ENCODE measurements at regions of chr14 and their contacts with region 1.

Region 1: DNA sequence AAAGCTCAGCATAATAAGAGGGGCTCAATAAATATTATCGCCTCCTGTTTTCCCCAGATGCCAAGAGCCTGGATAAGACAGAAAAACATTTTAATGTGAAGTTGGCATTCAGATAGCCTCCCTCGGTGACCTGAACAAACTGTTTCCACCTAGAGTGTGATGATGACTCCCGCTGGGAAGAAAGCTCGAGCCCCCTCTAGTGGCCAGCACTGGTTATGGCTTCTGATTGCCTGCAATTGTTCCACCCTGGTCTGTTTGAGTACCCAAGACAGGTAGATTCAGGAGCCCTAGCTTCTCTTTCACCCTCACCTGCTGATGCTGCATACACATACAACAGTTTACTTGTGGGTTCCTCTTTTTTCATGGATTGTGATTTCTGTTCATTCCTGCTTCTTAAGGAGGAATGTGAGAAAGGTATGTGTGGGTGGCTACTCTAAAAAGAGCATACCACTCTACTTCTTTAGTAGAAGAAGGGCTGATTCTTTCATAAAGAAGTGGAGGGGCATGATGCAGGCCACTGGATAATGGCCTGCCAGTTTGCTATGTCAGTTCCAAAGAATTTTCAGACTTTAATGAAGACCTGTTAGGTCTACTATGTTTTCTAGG is 6.4 kb downstream of the ERG28 start:
- DNase-seq: peak; percentile 73 to 89 (median 81)
- H3K4me3 ChIP-seq: no peak overlapping the region
- H3K27ac ChIP-seq: no peak overlapping the region
- H3K27me3 ChIP-seq: no peaks in the 10 kb centered on the region
- CTCF ChIP-seq: peak; percentile 83 to 99 (median 97)

Region 2: GRCh38 chr14:75577729-75578101 is 76.5 kb before region 1 on chr14:
- intact Hi-C with region 1: loop called (anchors 2 to 5 kb)
- DNase-seq: peak; percentile 72 to 88 (median 80)
- H3K4me3 ChIP-seq: peak overlapping the region; percentile 24 to 78 (median 62)
- H3K27ac ChIP-seq: peak overlapping the region in 47 of 59 donors; percentile 1 to 85 (median 71)
- H3K27me3 ChIP-seq: peaks cover 0 to 4% (median 0%) of the 10 kb centered on the region in 45 donors
- CTCF ChIP-seq: peak in 55 of 56 donors; percentile 51 to 90 (median 74)

Region 3: DNA sequence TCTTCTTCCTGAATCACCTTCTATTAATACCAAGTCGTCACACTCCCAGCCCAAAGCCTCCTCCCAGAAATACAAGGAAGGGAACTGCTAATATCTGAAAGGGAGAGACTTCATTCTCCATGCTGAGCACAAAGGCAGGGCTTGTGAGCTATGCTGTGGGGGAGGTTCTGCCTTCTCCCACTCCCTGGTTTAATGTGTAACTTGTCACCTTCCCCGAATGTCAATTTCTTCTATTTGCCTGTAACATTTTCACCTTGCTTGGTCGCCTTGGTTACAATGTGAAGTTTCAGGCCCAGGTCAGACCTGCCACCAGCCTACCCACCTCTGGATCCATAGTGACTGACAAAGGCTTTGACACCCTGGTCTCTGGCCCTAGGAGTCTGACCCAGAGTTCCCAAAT is 639.7 kb after region 1 on chr14:
- intact Hi-C with region 1: no loop called
- DNase-seq: no peak
- H3K4me3 ChIP-seq: no peak overlapping the region
- H3K27ac ChIP-seq: no peak overlapping the region
- H3K27me3 ChIP-seq: peaks cover 0 to 4% (median 0%) of the 10 kb centered on the region in 45 donors
- CTCF ChIP-seq: no peak

Measured in dorsolateral prefrontal cortex (tissue), 120 donors.